Activated CD8-positive, alpha-beta T cell treated with anti-CD3 and anti-CD28 coated beads for 36 hours (primary cell): ENCODE measurements at regions of chr16 and their contacts with region 1.

Region 1: GRCh38 chr16:89574681-89575246 is 794 bp upstream of the CPNE7 start:
- DNase-seq: peak; percentile 67
- ATAC-seq: peak; percentile 88
- H3K4me3 Mint-ChIP-seq: peak overlapping the region; percentile 47
- H3K27ac Mint-ChIP-seq: no peak overlapping the region
- H3K4me1 Mint-ChIP-seq: peaks cover 8% of the 10 kb centered on the region
- H3K27me3 Mint-ChIP-seq: peaks cover 10% of the 10 kb centered on the region
- CTCF ChIP-seq: peak; percentile 87

Region 2: GRCh38 chr16:89268987-89269735 is 305.6 kb before region 1 on chr16:
- CTCF ChIA-PET with region 1: no interaction called
- POLR2A ChIA-PET with region 1: no interaction called
- intact Hi-C with region 1: no loop called
- DNase-seq: no peak
- ATAC-seq: no peak
- H3K4me3 Mint-ChIP-seq: no peak overlapping the region
- H3K27ac Mint-ChIP-seq: no peak overlapping the region
- H3K4me1 Mint-ChIP-seq: no peaks in the 10 kb centered on the region
- H3K27me3 Mint-ChIP-seq: no peaks in the 10 kb centered on the region
- CTCF ChIP-seq: no peak

Region 3: GRCh38 chr16:89522287-89522686 is 52.5 kb before region 1 on chr16:
- CTCF ChIA-PET with region 1: no interaction called
- POLR2A ChIA-PET with region 1: no interaction called
- intact Hi-C with region 1: no loop called
- DNase-seq: no peak
- ATAC-seq: no peak
- H3K4me3 Mint-ChIP-seq: no peak overlapping the region
- H3K27ac Mint-ChIP-seq: no peak overlapping the region
- H3K4me1 Mint-ChIP-seq: peaks cover 2% of the 10 kb centered on the region
- H3K27me3 Mint-ChIP-seq: no peaks in the 10 kb centered on the region
- CTCF ChIP-seq: no peak

Region 4: DNA sequence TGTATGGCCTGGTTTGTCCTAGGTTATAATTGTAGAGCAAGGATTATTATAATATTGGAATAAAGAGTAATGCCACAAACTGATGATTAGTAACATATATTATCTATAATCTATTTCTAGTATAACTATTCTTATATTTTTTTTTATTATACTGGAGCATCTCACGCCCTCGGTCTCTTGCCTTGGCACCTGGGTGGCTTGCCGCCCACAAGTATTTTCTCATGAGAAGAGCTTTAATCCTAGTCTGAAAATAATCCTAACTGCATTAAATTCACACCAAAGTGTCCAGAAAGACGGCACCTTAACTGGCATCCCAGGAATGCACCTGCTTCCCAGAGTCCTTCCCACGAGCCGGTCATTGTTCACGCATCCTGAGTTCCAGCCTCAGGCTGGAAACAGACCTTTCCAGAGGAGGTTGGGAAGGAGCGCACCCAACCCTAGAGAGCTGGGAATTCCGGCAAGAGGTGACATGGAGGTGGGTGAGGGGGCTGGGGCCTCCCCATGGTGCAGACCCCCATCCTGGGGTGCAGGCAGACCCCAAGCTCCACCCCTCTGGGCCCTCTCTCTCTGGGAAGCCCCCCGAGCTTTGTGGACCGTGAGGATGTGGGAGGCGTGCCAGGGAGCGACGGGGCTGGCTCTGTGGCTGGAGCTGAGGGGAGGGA is 66.8 kb after region 1 on chr16:
- CTCF ChIA-PET with region 1: interaction called, 4 read pairs
- POLR2A ChIA-PET with region 1: no interaction called
- intact Hi-C with region 1: loop called (anchors 5 kb)
- DNase-seq: no peak
- ATAC-seq: no peak
- H3K4me3 Mint-ChIP-seq: no peak overlapping the region
- H3K27ac Mint-ChIP-seq: no peak overlapping the region
- H3K4me1 Mint-ChIP-seq: peaks cover 10% of the 10 kb centered on the region
- H3K27me3 Mint-ChIP-seq: no peaks in the 10 kb centered on the region
- CTCF ChIP-seq: peak; percentile 19